Transverse colon (tissue), 4 donors: ENCODE measurements at regions of chr10 and their contacts with region 1.

Region 1: GRCh38 chr10:104666106-104666505 is 25.0 kb downstream of the SORCS3 start:
- DNase-seq: no peak
- H3K4me3 ChIP-seq: no peak overlapping the region
- H3K27ac ChIP-seq: no peak overlapping the region
- H3K4me1 ChIP-seq: no peaks in the 10 kb centered on the region
- H3K27me3 ChIP-seq: no peaks in the 10 kb centered on the region
- CTCF ChIP-seq: no peak
- EP300 ChIP-seq: no peak
- POLR2A ChIP-seq: no peak

Region 2: DNA sequence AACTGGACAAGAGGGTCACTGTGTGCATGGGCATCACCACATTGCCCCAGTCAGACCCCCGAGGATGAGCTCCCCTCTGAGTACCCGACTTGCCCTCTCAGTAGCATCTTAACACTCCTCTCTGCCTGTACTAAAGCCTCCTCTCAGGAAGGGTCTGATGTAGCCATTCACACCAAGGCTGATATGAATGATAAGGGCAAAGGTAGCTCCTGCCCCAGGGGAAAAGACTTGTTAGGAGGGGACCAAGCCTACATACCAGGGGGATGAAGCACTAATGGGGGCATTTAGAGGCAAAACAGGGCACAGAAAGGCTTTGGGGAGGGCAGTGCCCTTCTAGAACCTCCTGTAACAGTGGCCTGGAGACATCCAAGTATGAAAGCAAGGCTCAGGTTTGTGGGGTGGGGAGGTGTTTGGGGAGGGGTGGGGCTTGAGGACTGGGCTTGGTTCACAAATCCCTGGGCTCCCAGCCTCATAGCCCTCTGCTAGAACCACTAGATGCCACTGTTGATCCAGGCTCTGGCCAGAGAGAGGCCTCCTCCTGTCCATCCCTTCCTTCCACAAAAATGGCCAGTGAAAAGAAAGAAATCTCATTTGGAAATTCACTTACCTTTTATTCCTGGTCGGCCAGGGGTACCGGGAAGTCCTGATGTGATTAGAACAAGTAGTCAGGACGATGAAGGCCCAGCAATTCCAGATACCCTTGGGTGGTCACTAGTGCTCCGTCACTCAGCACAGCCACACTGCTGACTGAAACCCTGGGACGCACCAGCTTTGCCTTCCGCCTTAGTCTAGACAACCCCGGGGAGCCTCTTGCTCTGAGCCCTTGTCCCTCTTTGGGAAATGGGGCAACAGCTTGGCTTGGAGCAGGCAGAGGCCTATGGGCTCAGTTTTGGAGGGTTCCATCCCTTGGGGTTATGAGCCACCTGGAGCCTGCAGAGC is 620.7 kb before region 1 on chr10:
- in situ Hi-C with region 1: no loop called
- intact Hi-C with region 1: no loop called
- DNase-seq: no peak
- H3K4me3 ChIP-seq: no peak overlapping the region
- H3K27ac ChIP-seq: no peak overlapping the region
- H3K4me1 ChIP-seq: peaks cover 0 to 15% (median 6%) of the 10 kb centered on the region in 4 donors
- H3K27me3 ChIP-seq: no peaks in the 10 kb centered on the region
- CTCF ChIP-seq: peak; percentile 29 to 45 (median 39)
- EP300 ChIP-seq: no peak
- POLR2A ChIP-seq: no peak

Region 3: DNA sequence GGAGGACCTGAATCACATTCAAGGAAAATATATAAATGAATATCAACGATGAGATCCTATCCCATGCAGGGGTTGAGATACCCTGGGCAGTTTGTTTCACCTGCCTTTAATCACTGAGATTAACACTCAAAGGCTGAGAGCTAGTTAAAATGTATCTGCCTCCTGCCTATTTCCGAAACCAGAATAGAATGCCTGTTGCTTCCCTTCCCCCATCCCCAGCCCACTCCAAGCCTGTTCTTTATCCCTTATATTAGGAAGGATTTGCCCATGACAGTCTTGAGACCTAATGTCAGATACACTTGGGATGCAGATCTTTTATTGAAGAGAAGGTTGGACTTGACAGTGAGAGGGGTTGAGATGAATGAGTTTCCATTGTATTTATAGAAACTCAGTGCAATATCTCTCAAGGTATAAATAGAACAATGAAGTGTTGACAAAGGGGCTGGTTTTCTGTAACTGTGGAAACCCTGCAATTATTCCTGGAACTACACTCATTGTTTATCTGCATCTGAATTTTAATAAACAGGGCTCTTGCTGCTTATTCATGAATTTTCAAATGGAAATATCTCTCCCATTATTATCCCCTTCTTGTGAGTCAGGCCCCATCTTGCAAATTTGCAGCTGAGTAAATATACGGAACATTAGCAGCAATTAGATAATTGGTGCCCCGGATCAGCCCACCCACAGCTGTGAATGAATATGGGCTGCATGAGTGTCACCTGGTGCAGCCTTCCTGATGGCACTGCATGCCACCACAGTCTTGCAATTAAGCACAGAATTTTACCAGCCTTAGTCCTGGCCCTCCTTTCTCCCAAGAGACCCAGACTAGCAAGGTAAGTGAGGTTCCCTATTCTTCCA is 41.7 kb after region 1 on chr10:
- in situ Hi-C with region 1: no loop called
- intact Hi-C with region 1: loop called (anchors 1 kb)
- DNase-seq: no peak
- H3K4me3 ChIP-seq: no peak overlapping the region
- H3K27ac ChIP-seq: no peak overlapping the region
- H3K4me1 ChIP-seq: no peaks in the 10 kb centered on the region
- H3K27me3 ChIP-seq: no peaks in the 10 kb centered on the region
- CTCF ChIP-seq: no peak
- EP300 ChIP-seq: no peak
- POLR2A ChIP-seq: no peak